Activated CD8-positive, alpha-beta T cell treated with anti-CD3 and anti-CD28 coated beads for 36 hours (primary cell): ENCODE measurements at regions of chr19 and their contacts with region 1.

Region 1: DNA sequence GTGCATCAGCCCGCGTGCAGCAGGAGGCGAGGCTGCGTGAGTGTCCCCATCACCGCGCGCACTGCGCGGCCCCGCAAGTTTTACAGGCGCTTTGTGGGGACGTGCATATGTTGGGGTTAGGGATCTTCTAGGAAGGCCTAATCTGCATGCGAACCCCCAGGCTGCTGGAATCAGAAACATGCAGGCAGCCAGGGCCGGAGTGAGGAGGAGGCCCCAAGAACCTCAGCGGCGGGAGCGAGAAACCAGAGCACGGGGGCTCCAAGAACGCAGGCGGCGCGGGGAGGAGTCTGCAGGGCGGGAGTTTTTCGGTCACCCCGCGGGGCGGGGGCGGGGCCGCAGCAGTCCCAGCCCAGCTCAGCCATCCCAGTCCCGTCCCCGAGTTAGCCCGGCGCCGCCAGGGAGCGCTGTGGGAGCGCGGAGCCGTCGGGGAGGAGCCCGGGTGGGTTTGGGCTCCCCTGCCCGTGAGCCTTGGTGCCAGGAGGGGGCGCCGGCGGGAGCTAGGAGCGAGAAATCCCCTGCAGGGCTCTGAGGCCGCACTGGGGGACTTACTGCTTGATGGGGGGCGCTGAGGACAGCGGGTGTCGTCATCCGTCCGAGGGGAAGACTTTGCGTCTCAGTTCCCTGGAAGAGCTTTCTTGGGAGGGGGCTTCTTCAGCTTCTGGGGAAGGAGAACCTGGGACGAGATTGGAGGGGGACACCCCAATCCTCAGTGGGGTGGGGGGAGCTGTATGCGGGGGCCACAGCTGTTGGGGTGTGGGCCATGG is 933 bp upstream of the NRTN start:
- DNase-seq: peak; percentile 96
- ATAC-seq: peak; percentile 98
- H3K4me3 Mint-ChIP-seq: peak overlapping the region; percentile 69
- H3K27ac Mint-ChIP-seq: peak overlapping the region; percentile 76
- H3K4me1 Mint-ChIP-seq: peaks cover 22% of the 10 kb centered on the region
- H3K27me3 Mint-ChIP-seq: peaks cover 25% of the 10 kb centered on the region
- CTCF ChIP-seq: peak; percentile 93

Region 2: DNA sequence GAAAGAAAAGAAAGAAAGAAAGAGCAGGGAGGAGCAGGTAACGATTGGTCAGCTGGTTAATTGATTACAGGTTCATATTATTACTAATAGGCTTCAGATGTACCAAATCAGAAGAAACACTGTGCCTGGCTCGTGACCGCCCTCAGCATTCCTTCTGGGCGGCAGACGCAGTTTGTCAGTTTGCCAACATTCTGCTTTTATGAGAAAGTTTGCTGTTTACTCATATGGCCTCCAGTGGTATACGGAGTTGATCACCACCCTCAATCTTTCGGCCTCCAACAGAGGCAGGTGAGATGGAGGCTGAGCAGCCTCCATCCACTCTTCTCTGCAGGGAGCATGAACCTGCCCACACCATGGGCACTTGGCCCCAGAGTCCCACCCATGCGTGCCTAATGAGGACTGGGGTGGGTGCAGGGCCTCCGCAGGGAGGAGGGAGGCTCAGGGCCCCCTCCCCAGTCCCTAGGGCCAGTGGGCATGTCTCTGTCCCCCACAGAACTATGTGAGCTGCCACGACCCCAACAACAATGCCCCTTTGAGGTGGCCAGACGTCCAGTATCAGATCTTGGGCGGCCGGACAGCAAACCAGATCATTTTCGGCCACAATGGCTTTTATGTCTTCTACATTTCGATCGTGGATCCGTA is 28.1 kb before region 1 on chr19:
- CTCF ChIA-PET with region 1: no interaction called
- POLR2A ChIA-PET with region 1: no interaction called
- intact Hi-C with region 1: no loop called
- DNase-seq: no peak
- ATAC-seq: no peak
- H3K4me3 Mint-ChIP-seq: no peak overlapping the region
- H3K27ac Mint-ChIP-seq: no peak overlapping the region
- H3K4me1 Mint-ChIP-seq: no peaks in the 10 kb centered on the region
- H3K27me3 Mint-ChIP-seq: no peaks in the 10 kb centered on the region
- CTCF ChIP-seq: no peak

Region 3: GRCh38 chr19:5790573-5791520 is 13.1 kb before region 1 on chr19 and contains the start of gene DUS3L:
- CTCF ChIA-PET with region 1: interaction called, 25 read pairs
- POLR2A ChIA-PET with region 1: interaction called, 31 read pairs
- intact Hi-C with region 1: no loop called
- DNase-seq: peak; percentile 99
- ATAC-seq: peak; percentile 96
- H3K4me3 Mint-ChIP-seq: peak within 1 kb of the TSS; percentile 100
- H3K27ac Mint-ChIP-seq: peak within 1 kb of the TSS; percentile 100
- H3K4me1 Mint-ChIP-seq: peaks cover 17% of the 10 kb centered on the region
- H3K27me3 Mint-ChIP-seq: no peaks in the 10 kb centered on the region
- CTCF ChIP-seq: no peak
- total RNA-seq, gene DUS3L: 69.6 to 74.5 TPM

Region 4: GRCh38 chr19:5827891-5828660 is 24.1 kb after region 1 on chr19:
- CTCF ChIA-PET with region 1: interaction called, 36 read pairs
- POLR2A ChIA-PET with region 1: interaction called, 6 read pairs
- intact Hi-C with region 1: no loop called
- DNase-seq: peak; percentile 96
- ATAC-seq: peak; percentile 83
- H3K4me3 Mint-ChIP-seq: peak overlapping the region; percentile 89
- H3K27ac Mint-ChIP-seq: peak overlapping the region; percentile 95
- H3K4me1 Mint-ChIP-seq: peaks cover 7% of the 10 kb centered on the region
- H3K27me3 Mint-ChIP-seq: no peaks in the 10 kb centered on the region
- CTCF ChIP-seq: no peak

Region 5: DNA sequence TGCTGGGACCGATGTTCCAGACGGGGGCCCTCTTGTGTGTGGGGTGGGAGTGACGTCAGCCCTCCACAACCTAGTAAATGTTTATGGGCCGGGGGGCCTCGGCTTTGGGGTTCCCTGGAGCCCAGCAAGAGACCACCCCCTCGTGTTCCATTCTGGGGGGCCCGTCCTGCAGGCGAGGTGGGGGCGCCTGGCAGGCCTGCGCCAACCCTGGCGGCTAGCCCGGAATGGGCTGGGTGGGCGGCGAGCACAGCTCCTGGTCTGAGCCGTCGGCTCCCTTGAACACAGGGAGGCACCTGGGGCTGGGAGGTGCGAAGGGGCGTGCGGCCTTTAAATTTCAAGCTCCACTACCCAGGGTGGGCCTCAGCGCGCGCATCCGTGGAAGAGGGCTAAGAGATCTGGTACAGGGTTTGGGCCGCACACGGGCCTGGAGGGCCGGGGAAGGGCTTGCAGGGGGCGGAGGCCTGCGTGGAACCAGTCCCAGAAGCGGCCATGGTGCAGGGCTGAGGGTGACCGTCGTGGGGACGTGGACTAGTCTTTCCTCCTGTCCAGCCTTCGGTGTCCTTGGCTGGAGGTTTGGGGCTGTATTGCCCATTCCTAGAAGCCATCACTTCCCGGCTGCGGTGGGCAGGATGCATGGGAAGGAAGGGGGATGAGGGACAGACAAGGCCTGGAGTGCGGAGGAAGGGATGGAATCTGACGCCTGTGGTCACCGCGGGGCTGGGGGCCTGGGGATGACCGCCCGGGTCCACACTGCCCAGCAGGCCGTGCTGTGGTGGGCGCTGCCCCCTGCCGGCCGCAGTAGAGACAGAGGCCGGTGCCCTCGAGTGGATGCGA is 88.2 kb after region 1 on chr19:
- CTCF ChIA-PET with region 1: interaction called, 43 read pairs
- POLR2A ChIA-PET with region 1: interaction called, 4 read pairs
- intact Hi-C with region 1: no loop called
- DNase-seq: peak; percentile 34
- ATAC-seq: peak; percentile 66
- H3K4me3 Mint-ChIP-seq: no peak overlapping the region
- H3K27ac Mint-ChIP-seq: no peak overlapping the region
- H3K4me1 Mint-ChIP-seq: no peaks in the 10 kb centered on the region
- H3K27me3 Mint-ChIP-seq: no peaks in the 10 kb centered on the region
- CTCF ChIP-seq: peak; percentile 59

Region 6: DNA sequence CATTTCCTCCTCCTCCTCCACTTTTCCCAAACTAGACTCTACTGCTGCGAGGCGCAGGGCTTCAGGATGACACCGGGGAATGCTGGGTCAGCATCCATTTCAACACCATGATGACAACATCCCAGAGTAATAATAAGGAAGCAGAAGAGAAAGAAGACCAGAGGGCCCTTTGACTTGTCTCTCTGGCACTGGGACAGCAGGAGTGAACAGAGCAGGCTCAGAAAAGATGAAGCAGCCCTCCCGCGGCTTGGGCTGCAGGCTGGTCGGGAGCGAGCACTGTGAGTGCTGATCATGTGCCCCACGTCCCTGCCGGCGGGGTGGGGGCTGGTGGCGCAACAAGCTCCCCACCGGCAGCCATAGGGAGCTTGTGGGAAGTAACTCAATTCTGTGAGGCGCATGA is 143.5 kb after region 1 on chr19:
- CTCF ChIA-PET with region 1: interaction called, 11 read pairs
- POLR2A ChIA-PET with region 1: no interaction called
- intact Hi-C with region 1: no loop called
- DNase-seq: no peak
- ATAC-seq: no peak
- H3K4me3 Mint-ChIP-seq: no peak overlapping the region
- H3K27ac Mint-ChIP-seq: peak overlapping the region; percentile 75
- H3K4me1 Mint-ChIP-seq: peaks cover 87% of the 10 kb centered on the region
- H3K27me3 Mint-ChIP-seq: no peaks in the 10 kb centered on the region
- CTCF ChIP-seq: no peak